ENCODE measurements at regions of chr16 and their contacts with region 1.

Region 1: DNA sequence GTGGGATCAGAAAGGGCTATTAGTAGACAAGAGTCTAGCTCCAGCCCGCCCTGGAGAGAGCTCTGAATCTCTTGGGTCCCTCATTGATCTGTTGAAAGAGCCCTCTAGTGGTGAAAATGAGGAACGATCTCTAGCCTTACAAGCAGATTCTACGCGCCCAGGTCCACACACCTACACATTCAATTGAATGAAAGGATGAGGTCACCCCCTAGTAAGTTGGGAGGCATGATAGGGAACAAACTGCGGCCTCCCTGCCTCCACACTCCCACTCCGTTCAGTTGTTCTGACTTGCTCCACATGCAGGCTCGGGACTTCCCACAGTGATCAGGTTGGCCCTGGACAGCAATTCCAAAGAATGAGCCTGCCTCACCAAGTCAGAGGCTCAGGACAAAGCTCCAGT is 2.9 kb upstream of the CACNG3 start:
- DNase-seq: peak; percentile 63
- ATAC-seq: peak; percentile 79
- H3K4me3 Mint-ChIP-seq: no peak overlapping the region
- H3K27ac Mint-ChIP-seq: no peak overlapping the region
- H3K4me1 Mint-ChIP-seq: no peaks in the 10 kb centered on the region
- H3K27me3 Mint-ChIP-seq: peaks cover 45% of the 10 kb centered on the region

Region 2: GRCh38 chr16:23729503-23730424 is 523.4 kb before region 1 on chr16:
- CTCF ChIA-PET with region 1: no interaction called
- POLR2A ChIA-PET with region 1: no interaction called
- intact Hi-C with region 1: loop called in 1 of 2 experiments (anchors 10 kb)
- DNase-seq: no peak
- ATAC-seq: no peak
- H3K4me3 Mint-ChIP-seq: no peak overlapping the region
- H3K27ac Mint-ChIP-seq: no peak overlapping the region
- H3K4me1 Mint-ChIP-seq: peaks cover 8% of the 10 kb centered on the region
- H3K27me3 Mint-ChIP-seq: peaks cover 11% of the 10 kb centered on the region

Region 3: GRCh38 chr16:24041826-24042631 is 211.2 kb before region 1 on chr16:
- CTCF ChIA-PET with region 1: interaction called, 5 read pairs
- POLR2A ChIA-PET with region 1: no interaction called
- intact Hi-C with region 1: loop called (anchors 1 kb)
- DNase-seq: peak; percentile 90
- ATAC-seq: peak; percentile 93
- H3K4me3 Mint-ChIP-seq: no peak overlapping the region
- H3K27ac Mint-ChIP-seq: no peak overlapping the region
- H3K4me1 Mint-ChIP-seq: peaks cover 5% of the 10 kb centered on the region
- H3K27me3 Mint-ChIP-seq: no peaks in the 10 kb centered on the region

Region 4: DNA sequence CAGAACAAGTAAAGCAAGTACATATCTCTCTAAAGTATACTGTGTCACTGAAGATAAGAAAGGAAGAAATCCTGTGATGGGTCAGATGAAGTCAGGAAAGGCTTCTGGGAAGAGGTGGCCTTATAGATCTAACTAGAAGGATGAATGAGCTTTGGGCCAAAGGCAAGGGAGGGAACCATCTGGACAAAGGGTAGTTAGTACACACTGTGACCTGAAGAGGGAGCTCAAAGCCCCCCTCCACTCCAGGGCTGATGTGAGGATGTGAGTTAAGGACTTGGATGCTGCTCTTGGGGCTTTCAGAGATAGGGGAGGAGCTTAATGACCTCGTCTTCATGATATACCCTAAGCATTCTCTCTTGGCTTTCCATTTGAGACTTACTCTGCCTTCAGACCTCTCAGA is 182.3 kb before region 1 on chr16:
- CTCF ChIA-PET with region 1: interaction called, 29 read pairs
- POLR2A ChIA-PET with region 1: interaction called, 3 read pairs
- intact Hi-C with region 1: loop called (anchors 1 kb)
- DNase-seq: peak; percentile 63
- ATAC-seq: peak; percentile 97
- H3K4me3 Mint-ChIP-seq: no peak overlapping the region
- H3K27ac Mint-ChIP-seq: no peak overlapping the region
- H3K4me1 Mint-ChIP-seq: peaks cover 28% of the 10 kb centered on the region
- H3K27me3 Mint-ChIP-seq: no peaks in the 10 kb centered on the region

Region 5: DNA sequence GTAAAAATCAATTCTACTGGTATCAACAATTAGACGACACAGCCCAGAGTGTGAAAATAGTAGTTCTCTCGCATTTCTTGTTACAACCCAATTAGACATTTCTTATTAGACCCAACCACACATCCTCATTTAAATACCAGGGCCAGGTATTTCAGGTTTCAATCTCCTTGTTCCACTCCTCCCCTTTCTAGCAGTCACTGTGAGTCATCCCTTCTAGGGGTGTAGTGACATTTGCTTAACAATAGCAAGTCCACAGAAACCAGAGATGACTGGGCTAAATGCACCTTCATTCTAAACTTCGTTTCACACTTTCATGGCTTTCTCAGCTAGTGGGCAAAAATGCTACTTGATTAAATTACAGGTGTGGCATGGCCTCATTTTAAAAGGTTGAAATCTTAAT is 113.9 kb before region 1 on chr16:
- CTCF ChIA-PET with region 1: no interaction called
- POLR2A ChIA-PET with region 1: no interaction called
- intact Hi-C with region 1: loop called in 1 of 2 experiments (anchors 5 kb)
- DNase-seq: peak; percentile 27
- ATAC-seq: peak; percentile 99
- H3K4me3 Mint-ChIP-seq: no peak overlapping the region
- H3K27ac Mint-ChIP-seq: peak overlapping the region; percentile 24
- H3K4me1 Mint-ChIP-seq: peaks cover 24% of the 10 kb centered on the region
- H3K27me3 Mint-ChIP-seq: no peaks in the 10 kb centered on the region

Region 6: DNA sequence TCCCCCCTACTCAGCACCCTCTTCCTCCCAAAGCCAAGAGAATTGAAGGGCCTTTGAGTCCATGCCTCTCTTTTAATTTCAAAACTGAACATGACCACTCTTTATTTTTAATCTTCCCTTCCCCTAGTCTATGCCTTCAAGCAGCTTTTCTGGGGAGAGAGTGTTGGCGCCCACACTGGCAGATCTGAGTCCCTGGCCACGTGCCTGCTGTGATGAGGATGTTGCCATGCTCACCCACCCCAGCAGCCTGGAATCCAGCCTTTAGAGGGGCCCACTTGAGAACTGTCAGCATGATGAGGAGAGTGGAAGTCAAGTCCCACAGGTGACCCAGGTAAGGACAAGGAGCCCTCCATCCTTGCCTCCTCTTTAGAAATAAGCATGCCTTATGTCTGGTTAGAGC is 17.4 kb before region 1 on chr16:
- CTCF ChIA-PET with region 1: interaction called, 10 read pairs
- POLR2A ChIA-PET with region 1: no interaction called
- intact Hi-C with region 1: no loop called
- DNase-seq: no peak
- ATAC-seq: no peak
- H3K4me3 Mint-ChIP-seq: no peak overlapping the region
- H3K27ac Mint-ChIP-seq: no peak overlapping the region
- H3K4me1 Mint-ChIP-seq: no peaks in the 10 kb centered on the region
- H3K27me3 Mint-ChIP-seq: peaks cover 7% of the 10 kb centered on the region